ENCODE measurements at regions of chr15 and their contacts with region 1.

Region 1: GRCh38 chr15:40323239-40323952 is at the start of gene INAFM2:
- DNase-seq: peak; percentile 92
- ATAC-seq: peak; percentile 87
- H3K4me3 Mint-ChIP-seq: peak within 1 kb of the TSS; percentile 71
- H3K27ac Mint-ChIP-seq: no peak within 1 kb of the TSS
- H3K4me1 Mint-ChIP-seq: peaks cover 25% of the 10 kb centered on the region
- H3K27me3 Mint-ChIP-seq: no peaks in the 10 kb centered on the region
- total RNA-seq, gene INAFM2: 9.9 to 11.2 TPM

Region 2: GRCh38 chr15:39934397-39935071 is 388.9 kb before region 1 on chr15:
- CTCF ChIA-PET with region 1: no interaction called
- POLR2A ChIA-PET with region 1: no interaction called
- intact Hi-C with region 1: loop called in 1 of 2 experiments (anchors 2 kb)
- DNase-seq: peak; percentile 24
- ATAC-seq: no peak
- H3K4me3 Mint-ChIP-seq: peak overlapping the region; percentile 95
- H3K27ac Mint-ChIP-seq: peak overlapping the region; percentile 83
- H3K4me1 Mint-ChIP-seq: peaks cover 41% of the 10 kb centered on the region
- H3K27me3 Mint-ChIP-seq: no peaks in the 10 kb centered on the region

Region 3: DNA sequence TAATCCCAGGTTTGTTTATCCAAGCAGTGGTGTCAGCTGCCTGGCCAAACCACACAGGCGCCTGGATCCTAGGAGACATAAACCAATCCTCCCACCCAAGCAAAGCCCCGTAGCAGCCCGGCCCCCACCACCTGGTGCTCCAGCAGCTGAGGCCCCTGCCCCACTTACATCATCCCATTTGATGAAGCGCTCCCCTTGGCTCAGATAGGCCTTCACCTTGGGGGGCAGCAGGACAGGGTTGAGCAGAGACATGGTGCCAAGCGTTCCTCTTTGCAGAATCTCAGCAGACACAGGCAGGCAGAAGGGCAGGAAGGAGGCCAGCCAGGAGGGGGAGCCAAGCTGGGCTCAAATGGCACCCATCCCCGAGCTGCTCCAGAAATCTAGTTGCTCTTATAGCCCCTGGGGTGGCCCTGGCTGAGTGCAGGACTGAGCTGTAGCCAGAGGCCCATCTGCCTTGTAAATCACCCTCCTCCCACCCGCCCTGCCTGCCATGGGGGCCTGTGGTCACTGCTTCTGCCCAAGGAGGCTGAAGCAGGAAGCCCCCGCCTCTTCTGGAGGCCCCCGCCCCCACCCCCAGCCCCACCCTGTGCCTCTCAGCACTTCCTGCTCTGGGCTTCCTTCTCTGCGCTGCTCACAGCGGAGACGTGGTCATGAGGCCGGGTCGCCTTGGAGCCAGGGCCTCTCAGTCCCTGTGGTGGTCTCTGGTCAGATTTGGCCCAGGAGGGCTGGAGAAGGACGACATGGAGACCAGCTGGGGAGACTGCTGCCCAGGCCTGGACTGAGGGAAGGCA is 15.8 kb before region 1 on chr15 and contains the start of gene PLCB2:
- CTCF ChIA-PET with region 1: interaction called, 135 read pairs
- POLR2A ChIA-PET with region 1: interaction called, 7 read pairs
- intact Hi-C with region 1: loop called (anchors 1 kb)
- DNase-seq: peak; percentile 83
- ATAC-seq: peak; percentile 79
- H3K4me3 Mint-ChIP-seq: peak within 1 kb of the TSS; percentile 91
- H3K27ac Mint-ChIP-seq: peak within 1 kb of the TSS; percentile 97
- H3K4me1 Mint-ChIP-seq: peaks cover 31% of the 10 kb centered on the region
- H3K27me3 Mint-ChIP-seq: no peaks in the 10 kb centered on the region
- total RNA-seq, gene PLCB2: 67.9 to 86.8 TPM

Region 4: GRCh38 chr15:40357723-40358470 is 34.5 kb after region 1 on chr15 and contains the start of gene DISP2:
- CTCF ChIA-PET with region 1: interaction called, 3 read pairs
- POLR2A ChIA-PET with region 1: no interaction called
- intact Hi-C with region 1: loop called in 1 of 2 experiments (anchors 1 kb)
- DNase-seq: peak; percentile 93
- ATAC-seq: peak; percentile 94
- H3K4me3 Mint-ChIP-seq: peak within 1 kb of the TSS; percentile 67
- H3K27ac Mint-ChIP-seq: peak within 1 kb of the TSS; percentile 20
- H3K4me1 Mint-ChIP-seq: peaks cover 3% of the 10 kb centered on the region
- H3K27me3 Mint-ChIP-seq: peaks cover 7% of the 10 kb centered on the region
- total RNA-seq, gene DISP2: 0.02 to 0.04 TPM

Region 5: GRCh38 chr15:40405501-40406381 is 82.3 kb after region 1 on chr15 and contains the start of gene IVD:
- CTCF ChIA-PET with region 1: no interaction called
- POLR2A ChIA-PET with region 1: no interaction called
- intact Hi-C with region 1: loop called in 1 of 2 experiments (anchors 1 kb)
- DNase-seq: peak; percentile 95
- ATAC-seq: peak; percentile 97
- H3K4me3 Mint-ChIP-seq: peak within 1 kb of the TSS; percentile 78
- H3K27ac Mint-ChIP-seq: peak within 1 kb of the TSS; percentile 95
- H3K4me1 Mint-ChIP-seq: peaks cover 52% of the 10 kb centered on the region
- H3K27me3 Mint-ChIP-seq: no peaks in the 10 kb centered on the region
- total RNA-seq, gene IVD: 30.8 to 46.2 TPM

Region 6: DNA sequence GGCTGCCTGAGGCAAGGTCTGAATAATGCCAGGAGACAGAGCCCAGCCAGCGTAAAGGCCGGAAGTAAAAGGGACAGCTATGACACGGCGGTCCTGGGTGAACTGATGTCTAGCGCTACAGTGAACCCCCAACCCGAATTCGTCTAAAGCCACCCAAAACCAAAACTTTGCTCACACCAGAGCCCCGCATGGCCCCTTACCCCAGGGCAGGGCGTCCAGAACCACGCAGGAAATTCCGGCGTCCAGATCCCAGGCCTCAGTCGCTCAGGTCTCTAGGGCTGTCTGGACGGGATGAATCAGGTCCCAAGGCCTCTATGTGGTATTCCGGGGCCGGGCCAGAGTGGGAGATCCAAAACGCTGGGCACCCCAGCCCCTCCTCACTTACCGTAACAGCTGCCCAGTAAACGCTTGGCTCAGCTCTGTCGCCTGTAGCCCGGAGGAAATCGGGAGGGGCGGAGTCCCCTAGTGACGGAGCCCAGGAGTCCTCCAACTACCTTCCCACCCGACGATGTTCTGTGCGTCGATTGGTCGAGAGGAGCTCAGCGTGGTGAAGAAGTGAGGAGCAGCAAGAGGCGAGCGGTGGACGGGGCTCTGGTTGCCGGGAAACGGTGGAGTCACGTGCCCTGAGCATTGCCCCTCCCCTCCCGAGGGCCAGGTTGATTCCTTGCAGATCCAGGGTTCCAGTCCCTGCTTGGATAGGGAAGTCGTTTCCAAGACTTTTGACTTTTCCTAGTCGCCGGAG is 241.4 kb after region 1 on chr15 and contains the start of gene CCDC32:
- CTCF ChIA-PET with region 1: interaction called, 3 read pairs
- POLR2A ChIA-PET with region 1: no interaction called
- intact Hi-C with region 1: loop called in 1 of 2 experiments (anchors 5 kb)
- DNase-seq: peak; percentile 97
- ATAC-seq: peak; percentile 97
- H3K4me3 Mint-ChIP-seq: peak within 1 kb of the TSS; percentile 96
- H3K27ac Mint-ChIP-seq: peak within 1 kb of the TSS; percentile 93
- H3K4me1 Mint-ChIP-seq: peaks cover 44% of the 10 kb centered on the region
- H3K27me3 Mint-ChIP-seq: no peaks in the 10 kb centered on the region
- total RNA-seq, gene CCDC32: 14.2 to 24.5 TPM

Measured in activated CD4-positive, alpha-beta T cell treated with anti-CD3 and anti-CD28 coated beads for 36 hours (primary cell).